Pancreas (tissue), 10 donors: ENCODE measurements at regions of chr14 and their contacts with region 1.

Region 1: DNA sequence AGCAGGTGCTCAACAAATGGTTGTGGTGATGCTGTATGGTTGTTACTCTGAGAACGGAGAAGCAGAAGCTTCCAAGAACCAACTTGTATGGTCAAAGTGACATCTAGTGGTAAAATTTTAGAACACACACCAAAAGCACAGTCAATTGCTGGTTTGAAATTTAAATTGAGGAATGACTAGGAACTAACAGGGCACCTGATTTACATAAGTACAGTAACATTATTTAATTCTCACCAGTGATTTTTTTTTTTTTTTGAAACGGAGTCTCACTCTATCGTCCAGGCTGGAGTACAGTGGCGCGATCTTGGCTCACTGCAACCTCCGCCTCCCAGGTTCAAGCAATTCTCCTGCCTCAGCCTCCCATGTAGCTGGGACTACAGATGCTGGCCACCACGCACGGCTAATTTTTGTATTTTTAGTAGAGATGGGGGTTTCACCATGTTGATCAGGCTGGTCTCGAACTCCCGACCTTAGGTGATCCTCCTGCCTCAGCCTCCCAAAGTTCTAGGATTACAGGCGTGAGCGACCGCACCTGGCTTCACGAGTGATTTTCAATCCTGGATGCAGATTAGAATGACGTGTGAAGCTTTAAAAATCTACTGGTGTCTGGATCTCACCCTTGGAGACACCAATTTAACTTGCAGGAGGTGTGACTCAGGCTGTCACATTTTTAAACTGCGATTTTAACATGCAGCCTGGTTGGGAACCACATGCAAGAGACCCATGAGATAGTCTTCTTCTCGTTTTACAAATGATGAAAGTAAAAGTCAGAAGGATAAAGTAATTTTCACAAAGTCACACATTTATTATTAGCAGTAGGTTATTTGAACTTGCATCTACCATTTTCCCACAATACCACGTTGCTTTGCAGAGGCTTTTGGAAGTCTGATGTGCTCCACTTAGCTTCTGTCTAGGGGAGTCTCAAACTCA is 14.1 kb upstream of the NUMB start:
- DNase-seq: no peak
- ATAC-seq: peak; percentile 82 to 96 (median 90)
- H3K4me3 ChIP-seq: no peak overlapping the region
- H3K27ac ChIP-seq: no peak overlapping the region
- H3K4me1 ChIP-seq: no peaks in the 10 kb centered on the region
- H3K27me3 ChIP-seq: no peaks in the 10 kb centered on the region
- CTCF ChIP-seq: peak; percentile 24 to 56 (median 48)

Region 2: GRCh38 chr14:73295198-73295796 is 177.2 kb before region 1 on chr14:
- intact Hi-C with region 1: loop called (anchors 5 to 10 kb)
- DNase-seq: no peak
- ATAC-seq: peak; percentile 58 to 81 (median 76)
- H3K4me3 ChIP-seq: no peak overlapping the region
- H3K27ac ChIP-seq: no peak overlapping the region
- H3K4me1 ChIP-seq: peaks cover 3 to 13% (median 11%) of the 10 kb centered on the region in 3 donors
- H3K27me3 ChIP-seq: no peaks in the 10 kb centered on the region
- CTCF ChIP-seq: peak; percentile 31 to 61 (median 60)